ENCODE measurements at regions of chr3 and their contacts with region 1.

Region 1: DNA sequence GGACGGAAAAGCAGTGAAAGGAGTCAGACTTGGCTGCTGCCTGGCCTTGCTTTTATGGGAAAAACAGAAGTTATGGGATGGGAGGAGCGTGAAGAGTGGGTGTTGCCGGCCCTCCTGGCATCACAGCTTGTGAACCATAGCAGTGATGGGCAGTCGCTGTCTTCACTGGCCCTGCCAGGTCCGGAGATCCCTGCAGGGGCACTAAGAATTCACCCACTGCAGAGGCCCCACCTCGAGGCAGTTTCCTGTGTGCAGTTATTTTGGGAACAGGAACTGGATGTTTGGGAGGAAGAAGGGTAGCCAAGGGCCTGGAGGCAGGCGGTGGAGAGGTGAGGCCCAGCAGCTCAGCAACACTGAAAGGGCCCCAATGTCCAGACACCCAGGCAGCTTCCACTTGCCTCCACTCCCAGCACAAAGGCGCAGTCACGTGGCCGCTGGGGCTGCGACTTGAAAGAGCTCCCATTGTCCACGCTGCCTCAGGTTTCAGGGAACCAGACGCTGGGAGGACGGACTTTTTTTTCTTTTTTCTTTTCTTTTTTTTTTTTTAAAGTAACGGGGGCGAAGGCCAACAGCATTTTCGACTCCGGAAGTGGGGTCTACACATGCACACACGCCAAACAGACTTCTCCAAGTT is 255.6 kb downstream of the ZNF621 start:
- DNase-seq: peak; percentile 48 to 70
- ATAC-seq: peak; percentile 84
- H3K4me3 ChIP-seq: peak overlapping the region; percentile 38 to 62 (median 44)
- H3K27ac ChIP-seq: peak overlapping the region; percentile 73 to 76 (median 74)
- H3K4me1 ChIP-seq: peaks cover 22 to 24% of the 10 kb centered on the region in 2 donors
- H3K27me3 ChIP-seq: no peaks in the 10 kb centered on the region
- CTCF ChIP-seq: peak in 1 of 5 experiments; percentile 8
- POLR2A ChIP-seq: no peak

Region 2: GRCh38 chr3:40877631-40878463 is 97.4 kb after region 1 on chr3:
- in situ Hi-C with region 1: no loop called
- intact Hi-C with region 1: loop called (anchors 5 kb)
- DNase-seq: peak; percentile 6 to 43
- ATAC-seq: peak; percentile 77 to 81
- H3K4me3 ChIP-seq: no peak overlapping the region
- H3K27ac ChIP-seq: peak overlapping the region; percentile 23 to 61 (median 39)
- H3K4me1 ChIP-seq: peaks cover 13 to 16% of the 10 kb centered on the region in 2 donors
- H3K27me3 ChIP-seq: no peaks in the 10 kb centered on the region
- CTCF ChIP-seq: no peak
- POLR2A ChIP-seq: no peak

Region 3: DNA sequence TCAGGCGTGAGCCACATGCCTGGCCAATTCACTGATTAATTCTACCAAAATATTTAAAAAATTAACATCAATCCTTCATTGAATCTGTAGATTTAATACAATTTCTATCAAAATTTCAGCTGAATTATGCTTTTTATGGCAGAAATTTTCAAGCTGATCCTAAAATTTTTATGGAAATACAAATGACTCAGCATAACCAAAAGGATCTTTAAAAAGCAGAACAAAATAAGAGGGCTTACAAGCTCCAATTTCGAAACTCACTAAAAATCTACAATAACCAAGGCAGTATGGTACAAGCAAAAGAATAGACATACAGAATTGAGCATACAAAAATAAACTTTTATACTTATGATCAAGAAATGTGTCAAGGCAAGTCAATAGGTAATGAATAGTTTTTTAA is 238.4 kb after region 1 on chr3:
- in situ Hi-C with region 1: no loop called
- intact Hi-C with region 1: no loop called
- DNase-seq: no peak
- ATAC-seq: no peak
- H3K4me3 ChIP-seq: no peak overlapping the region
- H3K27ac ChIP-seq: no peak overlapping the region
- H3K4me1 ChIP-seq: no peaks in the 10 kb centered on the region
- H3K27me3 ChIP-seq: no peaks in the 10 kb centered on the region
- CTCF ChIP-seq: no peak
- POLR2A ChIP-seq: no peak